A549 (cell line): ENCODE measurements at regions of chr1 and their contacts with region 1.

Region 1: DNA sequence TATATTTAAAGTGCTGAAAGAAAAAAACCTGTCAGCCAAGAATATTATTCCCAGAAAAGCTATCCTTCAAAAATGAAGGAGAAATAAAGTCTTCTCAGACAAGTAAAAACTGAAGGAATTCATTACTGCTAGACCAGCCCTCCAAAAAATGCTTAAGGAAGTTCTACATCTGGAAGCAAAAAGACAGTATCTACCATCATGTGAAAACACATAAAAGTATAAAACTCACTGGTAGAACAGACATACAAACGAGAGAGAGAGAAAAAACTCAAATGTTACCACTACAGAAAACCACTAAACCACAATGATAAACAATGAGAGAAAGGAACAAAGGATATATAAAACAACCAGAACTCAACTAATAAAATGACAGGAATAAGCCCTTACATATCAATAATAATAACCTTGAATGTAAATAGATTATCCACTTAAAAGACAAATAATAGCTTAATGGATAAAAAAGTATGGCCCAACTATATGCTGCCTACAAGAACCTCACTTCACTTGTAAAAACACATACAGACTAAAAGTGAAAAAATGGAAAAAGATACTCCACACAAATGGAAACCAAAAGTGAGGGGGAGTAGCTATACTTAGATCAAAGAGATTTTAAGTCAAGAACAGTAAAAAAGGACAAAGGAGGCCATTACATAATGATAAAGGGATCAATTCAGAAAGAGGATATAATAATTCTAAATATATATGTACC is 22.0 kb downstream of the NSL1 start:
- DNase-seq: peak in 1 of 2 experiments; percentile 8
- ATAC-seq: no peak
- H3K4me3 ChIP-seq: no peak overlapping the region
- H3K27ac ChIP-seq: no peak overlapping the region
- H3K4me1 ChIP-seq: peaks cover 9% of the 10 kb centered on the region
- CTCF ChIP-seq: no peak
- EP300 ChIP-seq: no peak
- POLR2A ChIP-seq: no peak
- RAD21 ChIP-seq: no peak

Region 2: DNA sequence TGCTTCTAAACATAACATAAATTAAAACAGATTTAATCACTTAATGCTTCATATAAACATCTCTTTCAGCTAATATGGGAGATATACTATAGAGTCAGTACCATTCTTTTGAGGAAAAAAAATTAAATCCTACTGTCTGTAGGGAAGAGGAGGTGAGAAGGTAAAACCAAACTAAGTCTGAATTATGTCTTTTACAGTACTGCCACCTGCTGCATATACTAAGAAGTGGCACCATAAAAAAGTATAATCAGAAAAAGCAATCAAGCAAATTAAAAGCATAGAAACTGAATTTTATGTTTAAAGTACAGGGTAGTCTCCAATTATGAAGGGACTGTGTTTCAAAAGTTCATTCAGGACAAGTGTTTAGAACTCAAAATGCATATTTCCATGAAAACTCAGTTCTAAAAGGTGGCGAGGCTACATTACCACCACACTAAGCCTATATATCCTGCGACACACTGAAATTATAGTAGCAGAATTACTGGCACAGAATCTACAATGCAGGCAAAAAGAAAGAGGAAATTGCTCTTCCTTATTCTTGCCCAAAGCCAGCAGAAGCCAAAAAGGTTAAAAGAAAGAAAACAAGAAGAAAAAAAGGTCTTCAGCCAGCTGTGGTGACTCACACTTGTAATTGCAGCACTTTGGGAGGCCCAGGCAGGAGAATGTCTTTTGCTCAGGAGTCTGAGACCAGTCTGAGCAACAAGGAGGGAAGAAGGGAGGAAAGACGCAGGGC is 13.0 kb after region 1 on chr1:
- CTCF ChIA-PET with region 1: interaction called, 12 read pairs
- POLR2A ChIA-PET with region 1: no interaction called
- DNase-seq: peak in 1 of 2 experiments; percentile 48
- ATAC-seq: peak; percentile 78 to 80
- H3K4me3 ChIP-seq: no peak overlapping the region
- H3K27ac ChIP-seq: no peak overlapping the region
- H3K4me1 ChIP-seq: no peaks in the 10 kb centered on the region
- CTCF ChIP-seq: peak; percentile 83
- EP300 ChIP-seq: no peak
- POLR2A ChIP-seq: no peak
- RAD21 ChIP-seq: peak; percentile 78 to 85